A673 (cell line): ENCODE measurements at regions of chr5 and their contacts with region 1.

Region 1: DNA sequence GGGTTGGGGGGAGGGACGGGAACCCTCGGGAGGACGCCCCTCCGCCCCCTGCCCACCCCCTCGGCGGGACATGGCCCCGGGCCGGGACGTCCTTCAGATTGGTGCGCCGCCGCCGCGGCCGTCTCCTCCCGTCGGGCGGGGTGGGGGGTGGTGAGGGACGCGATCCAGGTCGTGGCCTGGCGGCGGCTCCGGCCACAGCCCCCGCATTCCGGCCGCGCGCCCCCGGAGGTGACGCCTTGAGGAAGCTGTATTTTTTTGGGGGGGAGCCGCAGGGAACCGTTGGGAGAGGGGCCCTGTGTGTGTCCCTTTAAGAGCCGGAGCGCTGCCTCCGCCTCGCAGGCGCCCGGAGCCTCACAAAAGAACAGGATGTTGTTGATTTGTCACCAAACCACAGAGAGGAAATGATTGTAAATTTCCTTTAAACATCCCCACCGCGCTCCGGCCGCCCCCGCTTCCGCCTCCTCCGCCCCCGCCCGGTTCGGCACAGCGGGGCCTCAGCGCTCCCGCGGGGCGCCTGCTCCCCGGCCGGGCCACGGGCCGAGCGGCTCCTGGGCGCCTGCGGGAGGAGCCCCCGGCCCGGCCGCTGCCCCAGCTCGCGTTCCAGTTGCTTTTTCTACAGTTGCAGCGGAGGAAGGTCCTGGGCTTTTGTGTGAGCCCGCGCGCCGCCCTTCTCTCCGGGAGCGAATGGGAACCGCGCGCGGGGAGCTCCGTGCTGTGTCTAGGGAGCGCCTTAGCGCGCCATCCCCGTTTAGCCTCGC is 32.1 kb upstream of the SPRY4 start:
- DNase-seq: peak; percentile 98
- H3K4me3 ChIP-seq: peak overlapping the region; percentile 44
- H3K27ac ChIP-seq: peak overlapping the region; percentile 99
- H3K4me1 ChIP-seq: peaks cover 60% of the 10 kb centered on the region
- H3K27me3 ChIP-seq: no peaks in the 10 kb centered on the region
- CTCF ChIP-seq: no peak

Region 2: DNA sequence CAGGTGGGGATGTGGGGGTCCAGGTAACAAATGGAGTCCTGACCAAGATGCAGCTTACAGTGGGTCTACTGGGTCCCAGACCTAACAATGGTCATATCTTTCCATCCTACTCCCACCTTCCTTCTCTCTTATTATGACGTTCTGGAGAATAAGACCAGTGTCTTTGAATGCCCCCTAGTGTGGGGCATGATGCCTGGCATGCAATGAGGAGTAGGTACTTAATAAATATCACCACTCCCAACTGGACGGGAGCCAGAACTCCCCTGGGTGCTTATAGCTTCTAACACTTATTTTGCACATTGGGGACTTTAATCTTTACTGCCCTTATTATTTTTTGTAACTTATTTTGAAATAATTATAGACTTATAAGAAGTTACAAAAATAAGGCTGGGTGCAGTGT is 150.1 kb before region 1 on chr5:
- CTCF ChIA-PET with region 1: no interaction called
- POLR2A ChIA-PET with region 1: no interaction called
- intact Hi-C with region 1: no loop called
- DNase-seq: peak; percentile 60
- H3K4me3 ChIP-seq: no peak overlapping the region
- H3K27ac ChIP-seq: no peak overlapping the region
- H3K4me1 ChIP-seq: no peaks in the 10 kb centered on the region
- H3K27me3 ChIP-seq: no peaks in the 10 kb centered on the region
- CTCF ChIP-seq: peak; percentile 43; the same call in 1 of the 2 replicates

Region 3: DNA sequence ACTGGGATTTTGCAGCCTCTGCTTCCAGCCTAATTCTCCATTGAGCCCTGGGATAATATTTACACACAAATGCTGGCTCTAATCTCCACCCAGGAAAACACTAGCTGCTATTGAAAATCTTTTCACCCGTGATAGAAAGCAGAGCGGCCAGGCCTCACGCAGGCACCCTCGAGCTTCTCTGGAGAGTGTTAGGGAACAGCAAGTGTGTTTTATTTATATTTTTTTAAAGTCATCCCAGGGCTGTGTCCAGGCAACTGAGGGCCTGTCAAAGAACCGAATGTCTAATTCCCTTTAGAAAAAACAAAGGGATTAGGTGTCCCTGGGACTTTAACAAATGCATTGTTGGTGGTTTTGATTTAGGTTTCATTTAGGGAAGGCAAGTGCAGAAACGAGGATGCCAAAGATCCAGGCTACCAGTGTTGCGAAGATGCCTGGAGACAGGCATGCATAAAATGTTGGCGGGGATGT is 19.1 kb after region 1 on chr5:
- CTCF ChIA-PET with region 1: no interaction called
- POLR2A ChIA-PET with region 1: no interaction called
- intact Hi-C with region 1: no loop called
- DNase-seq: no peak
- H3K4me3 ChIP-seq: no peak overlapping the region
- H3K27ac ChIP-seq: no peak overlapping the region
- H3K4me1 ChIP-seq: peaks cover 10% of the 10 kb centered on the region
- H3K27me3 ChIP-seq: no peaks in the 10 kb centered on the region
- CTCF ChIP-seq: no peak

Region 4: DNA sequence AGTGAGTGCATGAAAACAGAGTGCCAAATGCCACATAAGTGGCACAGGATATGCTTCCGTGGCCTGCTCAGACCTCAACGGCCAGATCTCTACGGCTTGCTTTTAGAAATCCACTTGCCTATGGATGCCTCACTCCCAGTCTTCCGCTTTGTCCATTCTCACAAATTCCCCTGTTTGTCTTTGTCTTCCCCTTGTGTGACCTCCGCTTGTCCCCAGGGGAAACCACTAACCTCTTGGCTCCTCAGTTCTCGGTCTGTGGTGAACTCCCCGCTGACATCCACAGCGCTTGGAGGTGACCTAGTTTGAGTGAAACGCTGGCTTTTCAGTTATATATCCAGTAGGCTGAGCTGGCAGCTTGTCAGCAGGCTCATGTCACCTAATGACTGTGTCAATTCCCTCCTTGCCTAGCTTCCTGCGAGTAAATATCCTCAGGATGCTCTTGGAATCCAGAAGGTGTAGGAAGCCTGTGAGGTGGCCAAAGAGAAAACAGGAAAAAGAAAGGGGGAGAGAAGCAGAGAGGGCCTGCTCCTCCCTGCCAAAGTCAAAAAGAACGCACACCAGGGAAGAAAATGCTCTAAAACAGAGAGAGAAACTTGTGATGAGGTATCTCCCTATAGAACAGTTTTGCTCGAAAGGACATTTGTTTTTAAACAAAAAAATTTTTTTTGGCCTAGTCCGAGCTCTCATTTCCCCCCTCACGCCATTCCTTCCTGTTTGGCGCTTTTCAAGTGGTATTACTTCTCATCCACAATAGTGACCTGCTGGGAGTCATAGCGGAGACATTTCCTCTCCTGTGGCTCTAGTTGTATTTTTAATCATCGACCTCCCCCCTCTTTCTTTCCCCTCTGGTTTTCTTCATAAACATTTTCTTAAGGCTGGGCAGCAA is 69.5 kb after region 1 on chr5:
- CTCF ChIA-PET with region 1: no interaction called
- POLR2A ChIA-PET with region 1: no interaction called
- intact Hi-C with region 1: loop called (anchors 2 kb)
- DNase-seq: peak; percentile 93
- H3K4me3 ChIP-seq: peak overlapping the region; percentile 1
- H3K27ac ChIP-seq: peak overlapping the region; percentile 79
- H3K4me1 ChIP-seq: peaks cover 60% of the 10 kb centered on the region
- H3K27me3 ChIP-seq: no peaks in the 10 kb centered on the region
- CTCF ChIP-seq: no peak